Gastrocnemius medialis (tissue), 4 donors: ENCODE measurements at regions of chr4 and their contacts with region 1.

Region 1: GRCh38 chr4:124334119-124334518 is 378.4 kb downstream of the ANKRD50 start:
- DNase-seq: no peak
- ATAC-seq: peak in 1 of 2 donors; percentile 70
- H3K4me3 ChIP-seq: no peak overlapping the region
- H3K27ac ChIP-seq: no peak overlapping the region
- H3K4me1 ChIP-seq: no peaks in the 10 kb centered on the region
- H3K27me3 ChIP-seq: no peaks in the 10 kb centered on the region
- CTCF ChIP-seq: peak; percentile 22 to 59 (median 36)
- POLR2A ChIP-seq: no peak

Region 2: DNA sequence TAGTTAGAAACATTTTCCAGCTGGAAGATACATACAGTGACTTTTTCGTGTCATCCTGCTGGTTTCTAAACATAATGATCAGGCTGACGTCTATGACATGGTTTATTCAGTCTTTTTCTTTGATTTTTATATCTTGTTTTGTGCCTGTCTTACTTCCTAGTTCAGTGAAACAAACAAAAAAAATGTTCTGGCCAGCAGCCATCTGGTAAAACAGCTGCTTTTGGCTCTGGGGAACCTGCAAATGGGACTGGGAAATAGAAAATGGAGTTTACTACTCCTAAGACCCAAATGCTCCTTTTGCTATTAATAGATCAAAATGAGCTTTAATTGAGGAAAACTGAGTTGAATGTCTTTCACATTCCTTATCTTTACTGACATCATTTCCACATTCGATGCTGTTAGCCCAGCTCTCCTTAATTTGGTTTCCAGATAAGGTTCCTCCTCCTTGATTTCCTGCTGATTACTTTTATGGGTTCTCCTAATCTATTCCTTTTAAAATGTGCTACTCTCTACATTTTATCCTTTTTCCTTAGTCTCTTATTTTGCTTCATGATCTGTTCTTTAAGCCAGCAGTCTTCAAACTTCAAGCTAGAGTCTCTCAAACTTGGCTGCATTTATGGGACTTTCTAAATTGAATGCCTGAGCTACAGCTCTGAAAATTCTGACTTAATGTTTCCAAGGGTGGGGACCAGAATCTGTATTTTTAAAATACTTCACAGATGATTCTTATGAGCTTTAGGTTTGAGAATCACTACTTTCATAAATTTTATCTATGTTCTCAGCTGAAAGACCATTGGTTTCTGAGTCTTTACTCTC is 121.1 kb before region 1 on chr4:
- in situ Hi-C with region 1: no loop called
- intact Hi-C with region 1: no loop called
- DNase-seq: no peak
- ATAC-seq: no peak
- H3K4me3 ChIP-seq: no peak overlapping the region
- H3K27ac ChIP-seq: peak overlapping the region; percentile 34 to 44 (median 38)
- H3K4me1 ChIP-seq: peaks cover 0 to 7% of the 10 kb centered on the region in 2 donors
- H3K27me3 ChIP-seq: no peaks in the 10 kb centered on the region
- CTCF ChIP-seq: no peak
- POLR2A ChIP-seq: no peak

Region 3: DNA sequence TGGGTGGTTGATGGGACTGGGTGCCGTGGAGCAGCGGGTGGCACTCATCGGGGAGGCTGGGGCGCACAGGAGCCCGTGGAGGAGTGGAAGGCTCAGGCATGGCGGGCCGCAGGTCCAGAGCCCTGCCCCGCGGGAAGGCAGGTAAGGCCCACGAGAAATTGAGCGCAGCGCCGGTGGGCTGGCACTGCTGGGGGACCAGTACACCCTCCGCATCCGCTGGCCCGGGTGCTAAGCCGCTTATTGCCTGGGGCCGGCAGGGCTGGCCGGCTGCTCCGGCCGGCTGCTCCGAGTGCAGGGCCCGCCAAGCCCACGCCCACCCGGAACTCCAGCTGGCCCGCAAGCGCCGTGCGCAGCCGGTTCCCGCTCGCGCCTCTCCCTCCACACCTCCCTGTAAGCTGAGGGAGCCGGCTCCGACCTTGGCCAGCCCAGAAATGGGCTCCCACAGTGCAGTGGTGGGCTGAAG is 895.5 kb after region 1 on chr4:
- in situ Hi-C with region 1: loop called in 3 of 4 experiments (anchors 5 to 25 kb)
- intact Hi-C with region 1: no loop called
- DNase-seq: no peak
- ATAC-seq: no peak
- H3K4me3 ChIP-seq: no peak overlapping the region
- H3K27ac ChIP-seq: no peak overlapping the region
- H3K4me1 ChIP-seq: no peaks in the 10 kb centered on the region
- H3K27me3 ChIP-seq: no peaks in the 10 kb centered on the region
- CTCF ChIP-seq: no peak
- POLR2A ChIP-seq: no peak

Region 4: GRCh38 chr4:125244848-125245450 is 910.8 kb after region 1 on chr4:
- in situ Hi-C with region 1: loop called in 3 of 4 experiments (anchors 10 to 25 kb)
- intact Hi-C with region 1: loop called (anchors 2 kb)
- DNase-seq: no peak
- ATAC-seq: no peak
- H3K4me3 ChIP-seq: no peak overlapping the region
- H3K27ac ChIP-seq: no peak overlapping the region
- H3K4me1 ChIP-seq: no peaks in the 10 kb centered on the region
- H3K27me3 ChIP-seq: no peaks in the 10 kb centered on the region
- CTCF ChIP-seq: peak in 3 of 5 experiments; percentile 38 to 47 (median 39)
- POLR2A ChIP-seq: no peak

Region 5: DNA sequence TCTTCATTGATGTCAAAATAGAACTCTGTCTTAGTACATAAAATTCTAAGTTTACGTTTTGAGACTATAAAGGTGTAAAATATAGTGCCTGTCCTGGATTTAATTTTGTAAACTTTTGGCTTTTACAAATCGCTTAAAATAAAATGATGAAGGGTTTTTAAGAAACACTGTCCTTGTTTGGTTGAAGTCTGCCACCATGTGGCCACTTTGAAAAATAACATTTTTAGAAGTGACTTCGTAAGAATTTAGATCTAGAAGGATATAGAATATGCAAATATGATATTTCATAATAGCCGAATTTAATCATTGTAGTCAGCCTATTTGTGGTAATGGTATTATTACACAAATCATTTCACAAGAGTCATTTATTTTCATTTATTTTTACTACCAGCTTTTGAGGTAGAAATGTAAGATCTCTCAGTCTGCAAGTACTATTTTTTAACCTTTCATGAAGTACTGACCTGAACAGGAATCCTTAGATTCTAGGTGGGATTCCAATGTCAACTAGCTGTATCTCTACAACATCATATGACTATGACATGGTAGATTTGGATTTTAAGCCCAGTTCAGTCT is 949.7 kb after region 1 on chr4:
- in situ Hi-C with region 1: no loop called
- intact Hi-C with region 1: loop called (anchors 2 kb)
- DNase-seq: no peak
- ATAC-seq: no peak
- H3K4me3 ChIP-seq: no peak overlapping the region
- H3K27ac ChIP-seq: no peak overlapping the region
- H3K4me1 ChIP-seq: no peaks in the 10 kb centered on the region
- H3K27me3 ChIP-seq: no peaks in the 10 kb centered on the region
- CTCF ChIP-seq: peak; percentile 21 to 61 (median 40)
- POLR2A ChIP-seq: no peak